Activated CD8-positive, alpha-beta T cell treated with anti-CD3 and anti-CD28 coated beads for 36 hours (primary cell): ENCODE measurements at regions of chr2 and their contacts with region 1.

Region 1: DNA sequence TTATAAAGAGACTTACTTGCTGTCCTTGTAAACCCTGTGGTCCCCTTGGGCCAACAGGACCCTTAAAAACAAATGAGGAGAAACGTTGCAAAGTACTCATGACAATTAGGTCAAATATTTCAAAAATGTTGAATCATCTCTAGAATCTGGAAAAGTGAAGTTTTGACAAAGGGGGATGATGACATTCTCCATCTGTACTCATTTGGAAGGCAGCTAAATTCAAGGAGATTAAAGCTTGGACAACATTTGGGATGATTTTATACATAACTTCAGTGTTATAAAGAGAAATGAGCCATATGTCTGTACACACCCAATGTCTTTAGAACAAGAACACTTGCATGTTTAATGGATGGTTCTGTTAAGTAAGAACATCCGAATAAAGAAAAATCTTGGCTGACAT is 92.9 kb downstream of the COL5A2 start:
- DNase-seq: no peak
- ATAC-seq: no peak
- H3K4me3 Mint-ChIP-seq: no peak overlapping the region
- H3K27ac Mint-ChIP-seq: no peak overlapping the region
- H3K4me1 Mint-ChIP-seq: peaks cover 3% of the 10 kb centered on the region
- H3K27me3 Mint-ChIP-seq: no peaks in the 10 kb centered on the region
- CTCF ChIP-seq: no peak

Region 2: DNA sequence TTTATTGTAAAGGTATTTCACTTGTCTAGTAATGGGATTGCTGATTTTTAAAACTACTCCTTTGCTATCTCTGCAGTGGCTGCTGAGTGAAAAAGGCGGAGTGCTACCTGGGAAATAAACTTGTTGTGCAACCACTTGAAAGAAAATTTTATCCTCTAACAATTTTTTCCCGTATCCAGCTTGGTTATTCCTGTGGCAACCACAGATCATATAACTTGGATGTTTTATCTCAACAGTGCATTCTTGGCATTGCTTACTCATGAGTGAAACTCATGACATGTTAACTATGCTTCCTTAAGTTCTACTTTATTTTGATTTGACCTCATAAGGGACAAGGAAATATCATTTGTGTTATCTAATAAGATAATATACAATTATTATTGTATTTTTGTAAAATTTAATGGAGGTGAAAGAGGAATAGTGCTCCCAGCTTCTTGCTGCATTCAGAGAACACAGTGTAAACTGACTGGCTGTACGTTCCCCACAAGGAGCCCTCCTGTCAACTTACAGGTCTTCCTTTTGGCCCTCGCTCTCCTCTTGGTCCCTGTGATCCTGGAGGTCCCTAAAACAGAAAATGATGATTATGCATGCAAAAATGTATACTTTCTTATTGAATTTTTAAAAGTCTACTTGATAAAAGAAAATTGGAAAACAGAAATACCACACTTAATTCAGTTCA is 10.2 kb after region 1 on chr2:
- CTCF ChIA-PET with region 1: interaction called, 17 read pairs
- POLR2A ChIA-PET with region 1: no interaction called
- intact Hi-C with region 1: no loop called
- DNase-seq: no peak
- ATAC-seq: no peak
- H3K4me3 Mint-ChIP-seq: no peak overlapping the region
- H3K27ac Mint-ChIP-seq: no peak overlapping the region
- H3K4me1 Mint-ChIP-seq: no peaks in the 10 kb centered on the region
- H3K27me3 Mint-ChIP-seq: no peaks in the 10 kb centered on the region
- CTCF ChIP-seq: no peak